RWPE1 (cell line): ENCODE measurements at regions of chr1 and their contacts with region 1.

Region 1: DNA sequence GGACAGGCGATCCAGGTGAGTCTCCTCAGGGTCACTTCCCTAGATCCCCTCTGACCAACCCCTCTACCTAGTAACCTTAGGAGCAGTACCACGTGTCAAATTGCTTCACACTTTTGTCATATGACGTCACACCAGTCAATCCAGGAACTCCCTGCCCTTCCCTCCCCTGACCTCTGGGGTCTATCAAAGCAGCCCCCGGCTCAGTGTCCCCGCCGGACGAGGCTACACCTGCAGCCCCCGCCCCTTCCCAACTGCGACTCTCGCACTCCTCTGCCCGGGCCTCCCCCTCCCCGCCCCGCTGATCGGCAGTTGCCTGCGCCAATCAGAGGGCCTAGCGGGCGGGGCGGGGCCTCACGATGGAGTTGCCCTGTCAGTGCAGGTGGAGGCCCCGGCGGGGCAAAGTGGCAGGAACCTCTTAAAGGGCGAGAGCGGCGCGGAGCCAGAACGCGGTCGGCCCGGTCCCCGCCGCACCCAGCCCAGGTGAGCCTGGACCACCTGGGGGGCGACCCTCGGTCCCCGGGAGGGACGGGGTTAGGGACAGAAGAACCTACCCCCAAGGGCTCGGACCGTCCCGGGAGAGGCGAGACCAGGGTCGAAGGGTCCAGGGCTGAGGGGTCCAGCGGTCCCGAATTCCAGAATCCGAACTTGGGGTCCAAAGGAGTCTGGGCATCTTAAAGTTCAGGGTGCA is 27.5 kb upstream of the EPB41 start:
- DNase-seq: peak; percentile 99
- H3K27ac ChIP-seq: peak overlapping the region; percentile 59
- CTCF ChIP-seq: no peak

Region 2: DNA sequence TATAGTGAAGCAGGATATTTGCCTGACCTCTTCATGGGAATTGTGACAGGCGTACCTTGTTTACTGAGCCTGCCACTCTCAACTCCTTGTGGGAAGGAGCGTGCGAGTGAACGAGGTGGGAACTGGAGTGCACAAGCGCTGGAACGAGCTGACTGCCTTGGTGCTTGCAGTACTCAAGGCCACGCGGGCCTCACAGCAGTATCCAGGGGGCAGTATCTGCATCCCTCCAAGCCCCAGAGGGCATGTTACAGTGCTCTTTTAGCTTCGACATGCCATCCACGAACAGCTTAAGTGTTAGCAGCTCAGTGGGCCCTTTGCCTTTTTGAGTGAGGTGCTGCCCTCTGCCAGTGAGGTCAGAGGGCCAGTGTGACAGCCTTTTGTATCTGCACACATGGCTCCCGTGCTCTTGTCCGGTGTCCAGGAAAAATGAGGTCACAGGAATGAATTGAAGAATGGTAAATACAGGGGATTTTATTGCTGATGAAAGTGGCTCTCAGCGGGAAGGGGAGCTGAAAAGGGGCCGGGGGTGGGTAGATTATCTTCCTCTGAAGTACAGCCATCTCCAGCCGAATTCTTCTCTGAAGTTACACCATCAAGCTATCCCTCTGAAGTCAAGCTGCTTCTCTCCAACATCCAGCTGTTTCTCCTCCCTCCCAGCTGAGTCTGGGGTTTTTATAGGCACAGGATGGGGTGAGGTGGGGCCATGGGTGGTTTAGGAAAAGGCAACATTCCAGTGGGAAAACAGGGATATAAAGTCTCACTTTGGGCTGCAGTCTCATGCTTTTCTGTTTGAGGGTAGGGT is 96.8 kb after region 1 on chr1:
- CTCF ChIA-PET with region 1: no interaction called
- POLR2A ChIA-PET with region 1: no interaction called
- DNase-seq: no peak
- H3K27ac ChIP-seq: no peak overlapping the region
- CTCF ChIP-seq: no peak

Region 3: GRCh38 chr1:29033829-29034466 is 147.1 kb after region 1 on chr1:
- CTCF ChIA-PET with region 1: interaction called, 74 read pairs
- POLR2A ChIA-PET with region 1: no interaction called
- DNase-seq: peak; percentile 57
- H3K27ac ChIP-seq: no peak overlapping the region
- CTCF ChIP-seq: peak; percentile 61

Region 4: DNA sequence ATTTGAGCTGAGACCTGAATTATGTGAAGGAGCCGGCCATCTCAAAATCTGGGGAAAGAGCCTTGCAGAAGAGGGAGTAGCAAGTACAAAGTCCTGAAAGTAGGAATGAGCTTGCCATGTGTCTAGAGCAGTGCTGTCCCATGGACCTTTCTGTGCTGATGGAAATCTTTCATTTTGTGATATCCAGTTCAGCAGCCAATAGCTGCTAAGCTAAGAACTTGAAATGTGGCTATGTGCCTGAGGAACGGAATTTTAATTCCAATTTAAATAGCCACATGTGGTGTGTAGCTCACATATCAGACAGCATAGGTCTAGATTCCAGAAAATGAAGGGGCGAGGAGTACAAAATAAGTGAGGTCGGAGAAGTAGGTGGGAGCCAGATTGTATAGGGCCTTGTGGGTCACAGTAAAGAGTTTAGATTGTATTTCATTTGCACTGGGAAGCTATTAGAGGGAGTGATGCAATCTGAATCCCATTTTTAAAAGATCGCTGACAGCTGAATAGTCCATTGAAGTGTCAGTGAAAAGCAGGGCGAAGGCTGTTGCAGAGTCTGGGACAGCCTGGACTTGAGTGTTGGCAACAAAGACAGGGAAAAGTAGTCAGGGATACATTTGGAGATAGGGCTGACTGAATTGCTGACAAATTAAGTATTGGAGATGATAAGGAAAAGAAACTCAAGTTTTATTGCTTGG is 156.5 kb after region 1 on chr1:
- CTCF ChIA-PET with region 1: interaction called, 16 read pairs
- POLR2A ChIA-PET with region 1: no interaction called
- DNase-seq: no peak
- H3K27ac ChIP-seq: no peak overlapping the region
- CTCF ChIP-seq: no peak

Region 5: GRCh38 chr1:29105839-29106238 is 219.0 kb after region 1 on chr1:
- CTCF ChIA-PET with region 1: interaction called, 10 read pairs
- POLR2A ChIA-PET with region 1: no interaction called
- DNase-seq: no peak
- H3K27ac ChIP-seq: no peak overlapping the region
- CTCF ChIP-seq: no peak

Region 6: GRCh38 chr1:29202584-29203340 is 315.9 kb after region 1 on chr1:
- CTCF ChIA-PET with region 1: interaction called, 21 read pairs
- POLR2A ChIA-PET with region 1: interaction called, 3 read pairs
- DNase-seq: peak; percentile 96
- H3K27ac ChIP-seq: peak overlapping the region; percentile 9; the same call in 1 of the 2 replicates
- CTCF ChIP-seq: peak; percentile 91